CD8-positive, alpha-beta T cell (primary cell): ENCODE measurements at regions of chr7 and their contacts with region 1.

Region 1: GRCh38 chr7:36723951-36724664 is at the start of gene AOAH:
- DNase-seq: peak; percentile 63 to 97 (median 81)
- ATAC-seq: peak; percentile 90
- H3K4me3 ChIP-seq: peak within 1 kb of the TSS; percentile 62 to 69
- H3K4me3 Mint-ChIP-seq: peak within 1 kb of the TSS; percentile 91
- H3K27ac ChIP-seq: peak within 1 kb of the TSS; percentile 74 to 81
- H3K27ac Mint-ChIP-seq: peak within 1 kb of the TSS; percentile 94
- H3K4me1 ChIP-seq: peaks cover 79% of the 10 kb centered on the region
- H3K4me1 Mint-ChIP-seq: peaks cover 92% of the 10 kb centered on the region
- H3K27me3 ChIP-seq: no peaks in the 10 kb centered on the region
- H3K27me3 Mint-ChIP-seq: no peaks in the 10 kb centered on the region
- CTCF ChIP-seq: no peak
- total RNA-seq, gene AOAH: 30.8 to 35.2 TPM

Region 2: GRCh38 chr7:36677769-36678437 is 46.2 kb before region 1 on chr7:
- CTCF ChIA-PET with region 1: interaction called, 8 read pairs
- POLR2A ChIA-PET with region 1: interaction called, 8 read pairs
- intact Hi-C with region 1: loop called (anchors 2 kb)
- DNase-seq: peak in 3 of 9 experiments; percentile 31 to 64 (median 32)
- ATAC-seq: peak; percentile 59
- H3K4me3 ChIP-seq: peak overlapping the region in 1 of 2 experiments; percentile 24
- H3K4me3 Mint-ChIP-seq: peak overlapping the region; percentile 70
- H3K27ac ChIP-seq: peak overlapping the region; percentile 15 to 75
- H3K27ac Mint-ChIP-seq: peak overlapping the region; percentile 91
- H3K4me1 ChIP-seq: peaks cover 32% of the 10 kb centered on the region
- H3K4me1 Mint-ChIP-seq: peaks cover 63% of the 10 kb centered on the region
- H3K27me3 ChIP-seq: no peaks in the 10 kb centered on the region
- H3K27me3 Mint-ChIP-seq: no peaks in the 10 kb centered on the region
- CTCF ChIP-seq: no peak

Region 3: GRCh38 chr7:36712015-36712414 is 12.1 kb before region 1 on chr7:
- CTCF ChIA-PET with region 1: no interaction called
- POLR2A ChIA-PET with region 1: interaction called, 3 read pairs
- intact Hi-C with region 1: loop called in 1 of 2 experiments (anchors 1 kb)
- DNase-seq: peak in 1 of 9 experiments; percentile 48
- ATAC-seq: peak; percentile 31
- H3K4me3 ChIP-seq: no peak overlapping the region
- H3K4me3 Mint-ChIP-seq: no peak overlapping the region
- H3K27ac ChIP-seq: peak overlapping the region in 1 of 2 experiments; percentile 50
- H3K27ac Mint-ChIP-seq: peak overlapping the region; percentile 86
- H3K4me1 ChIP-seq: peaks cover 7% of the 10 kb centered on the region
- H3K4me1 Mint-ChIP-seq: peaks cover 53% of the 10 kb centered on the region
- H3K27me3 ChIP-seq: no peaks in the 10 kb centered on the region
- H3K27me3 Mint-ChIP-seq: no peaks in the 10 kb centered on the region
- CTCF ChIP-seq: no peak

Region 4: DNA sequence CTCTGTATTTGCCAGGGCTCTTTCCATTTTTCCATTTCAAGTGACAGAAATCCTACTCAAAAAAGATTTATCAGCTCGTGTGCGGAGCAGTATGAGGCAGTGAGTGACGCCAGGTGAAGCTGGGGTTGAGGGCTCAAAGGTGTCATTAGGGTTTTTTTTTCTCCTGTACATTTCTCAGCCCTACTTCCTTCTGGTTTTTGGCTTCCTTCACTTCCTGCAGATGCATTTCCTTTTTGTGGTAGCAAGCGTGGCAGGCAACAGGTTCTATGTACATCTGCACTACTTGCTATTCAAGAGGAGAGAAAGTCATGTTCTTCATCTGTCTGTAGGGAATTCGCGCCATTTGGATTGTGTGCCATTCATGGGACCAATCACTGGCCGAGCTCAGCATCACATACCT is 53.0 kb after region 1 on chr7:
- CTCF ChIA-PET with region 1: interaction called, 3 read pairs
- POLR2A ChIA-PET with region 1: interaction called, 18 read pairs
- intact Hi-C with region 1: loop called (anchors 1 to 2 kb)
- DNase-seq: peak in 8 of 9 experiments; percentile 21 to 93 (median 58)
- ATAC-seq: peak; percentile 69
- H3K4me3 ChIP-seq: peak overlapping the region; percentile 26 to 38
- H3K4me3 Mint-ChIP-seq: peak overlapping the region; percentile 76
- H3K27ac ChIP-seq: peak overlapping the region; percentile 62 to 83
- H3K27ac Mint-ChIP-seq: peak overlapping the region; percentile 98
- H3K4me1 ChIP-seq: peaks cover 75% of the 10 kb centered on the region
- H3K4me1 Mint-ChIP-seq: peaks cover 90% of the 10 kb centered on the region
- H3K27me3 ChIP-seq: no peaks in the 10 kb centered on the region
- H3K27me3 Mint-ChIP-seq: no peaks in the 10 kb centered on the region
- CTCF ChIP-seq: no peak

Region 5: GRCh38 chr7:36871863-36872262 is 147.8 kb after region 1 on chr7:
- CTCF ChIA-PET with region 1: no interaction called
- POLR2A ChIA-PET with region 1: no interaction called
- intact Hi-C with region 1: loop called in 1 of 2 experiments (anchors 10 kb)
- DNase-seq: peak in 2 of 9 experiments; percentile 24 to 43
- ATAC-seq: peak; percentile 51
- H3K4me3 ChIP-seq: no peak overlapping the region
- H3K4me3 Mint-ChIP-seq: no peak overlapping the region
- H3K27ac ChIP-seq: no peak overlapping the region
- H3K27ac Mint-ChIP-seq: no peak overlapping the region
- H3K4me1 ChIP-seq: no peaks in the 10 kb centered on the region
- H3K4me1 Mint-ChIP-seq: peaks cover 12% of the 10 kb centered on the region
- H3K27me3 ChIP-seq: no peaks in the 10 kb centered on the region
- H3K27me3 Mint-ChIP-seq: no peaks in the 10 kb centered on the region
- CTCF ChIP-seq: no peak

Region 6: GRCh38 chr7:38248069-38248567 is 1524.0 kb after region 1 on chr7:
- CTCF ChIA-PET with region 1: no interaction called
- POLR2A ChIA-PET with region 1: no interaction called
- intact Hi-C with region 1: no loop called
- DNase-seq: no peak
- ATAC-seq: no peak
- H3K4me3 ChIP-seq: peak overlapping the region; percentile 24 to 32
- H3K4me3 Mint-ChIP-seq: peak overlapping the region; percentile 59
- H3K27ac ChIP-seq: peak overlapping the region in 1 of 2 experiments; percentile 85
- H3K27ac Mint-ChIP-seq: peak overlapping the region; percentile 77
- H3K4me1 ChIP-seq: peaks cover 6% of the 10 kb centered on the region
- H3K4me1 Mint-ChIP-seq: peaks cover 43% of the 10 kb centered on the region
- H3K27me3 ChIP-seq: no peaks in the 10 kb centered on the region
- H3K27me3 Mint-ChIP-seq: no peaks in the 10 kb centered on the region
- CTCF ChIP-seq: no peak